Activated CD4-positive, alpha-beta T cell treated with anti-CD3 and anti-CD28 coated beads, Interleukin-2, amount 10 ng/mL, durations not matched to agents 7 days and 5 days (primary cell): ENCODE measurements at regions of chr12 and their contacts with region 1.

Region 1: DNA sequence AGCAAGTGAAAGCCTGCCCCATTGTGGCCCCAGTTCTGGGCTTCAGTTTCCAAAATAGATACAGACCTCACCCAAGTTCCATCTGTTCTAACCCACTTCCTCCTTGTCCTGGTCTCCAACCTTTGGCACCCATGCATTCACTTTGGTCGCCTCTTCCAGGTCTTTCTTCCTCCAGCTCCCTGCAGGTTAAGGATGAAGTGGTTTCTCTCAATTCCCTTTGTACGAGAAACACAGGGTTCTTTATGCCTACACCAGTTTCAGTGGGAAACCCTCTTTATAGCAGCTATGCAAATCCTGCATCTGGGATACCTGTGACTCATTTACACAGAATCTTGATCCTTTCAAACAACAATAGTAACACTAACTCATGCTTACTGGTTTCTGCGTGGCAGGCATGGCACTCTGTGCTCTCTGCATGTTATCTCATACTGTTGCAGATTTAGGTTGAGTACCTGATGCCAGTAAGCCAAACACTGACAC is 110.6 kb upstream of the AMIGO2 start:
- DNase-seq: no peak
- H3K4me3 Mint-ChIP-seq: no peak overlapping the region
- H3K27ac Mint-ChIP-seq: peak overlapping the region; percentile 21
- H3K4me1 Mint-ChIP-seq: peaks cover 69% of the 10 kb centered on the region
- H3K27me3 Mint-ChIP-seq: no peaks in the 10 kb centered on the region

Region 2: GRCh38 chr12:46153268-46153872 is 1036.9 kb before region 1 on chr12:
- CTCF ChIA-PET with region 1: no interaction called
- POLR2A ChIA-PET with region 1: interaction called, 11 read pairs
- DNase-seq: no peak
- H3K4me3 Mint-ChIP-seq: no peak overlapping the region
- H3K27ac Mint-ChIP-seq: no peak overlapping the region
- H3K4me1 Mint-ChIP-seq: peaks cover 9% of the 10 kb centered on the region
- H3K27me3 Mint-ChIP-seq: peaks cover 8% of the 10 kb centered on the region

Region 3: DNA sequence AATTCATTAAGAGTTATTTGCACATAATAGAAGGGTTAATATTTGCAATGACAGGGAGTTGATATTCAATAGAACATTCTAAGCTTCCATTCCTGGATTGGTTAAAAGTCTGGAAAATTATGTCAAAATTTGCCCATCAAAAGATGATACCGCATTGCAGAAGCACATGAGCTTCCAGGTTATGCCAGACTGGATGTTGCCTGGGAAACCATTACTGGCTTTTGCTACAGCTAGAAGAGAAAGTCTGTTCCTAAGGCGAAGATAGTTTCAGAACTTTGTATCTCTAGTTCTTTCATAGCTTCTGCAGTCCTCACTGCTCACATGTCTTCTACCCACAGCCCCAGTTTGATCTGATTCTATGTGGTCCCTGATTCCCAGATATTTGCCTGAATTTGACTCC is 11.9 kb after region 1 on chr12:
- CTCF ChIA-PET with region 1: interaction called, 16 read pairs
- POLR2A ChIA-PET with region 1: no interaction called
- DNase-seq: no peak
- H3K4me3 Mint-ChIP-seq: no peak overlapping the region
- H3K27ac Mint-ChIP-seq: peak overlapping the region; percentile 10
- H3K4me1 Mint-ChIP-seq: peaks cover 48% of the 10 kb centered on the region
- H3K27me3 Mint-ChIP-seq: no peaks in the 10 kb centered on the region

Region 4: GRCh38 chr12:47207340-47207717 is 17.0 kb after region 1 on chr12:
- CTCF ChIA-PET with region 1: interaction called, 16 read pairs
- POLR2A ChIA-PET with region 1: no interaction called
- DNase-seq: peak; percentile 64
- H3K4me3 Mint-ChIP-seq: peak overlapping the region; percentile 70
- H3K27ac Mint-ChIP-seq: peak overlapping the region; percentile 89
- H3K4me1 Mint-ChIP-seq: peaks cover 74% of the 10 kb centered on the region
- H3K27me3 Mint-ChIP-seq: no peaks in the 10 kb centered on the region